CD8-positive, alpha-beta T cell (primary cell): ENCODE measurements at regions of chr17 and their contacts with region 1.

Region 1: GRCh38 chr17:42153919-42154742 is 658 bp downstream of the RAB5C start:
- DNase-seq: peak in 2 of 9 experiments; percentile 20 to 40
- ATAC-seq: no peak
- H3K4me3 ChIP-seq: peak overlapping the region; percentile 94 to 95
- H3K4me3 Mint-ChIP-seq: peak overlapping the region; percentile 98
- H3K27ac ChIP-seq: peak overlapping the region; percentile 78 to 87
- H3K27ac Mint-ChIP-seq: peak overlapping the region; percentile 95
- H3K4me1 ChIP-seq: peaks cover 24% of the 10 kb centered on the region
- H3K4me1 Mint-ChIP-seq: peaks cover 39% of the 10 kb centered on the region
- H3K27me3 ChIP-seq: no peaks in the 10 kb centered on the region
- H3K27me3 Mint-ChIP-seq: no peaks in the 10 kb centered on the region
- CTCF ChIP-seq: no peak

Region 2: GRCh38 chr17:41930009-41930832 is 223.9 kb before region 1 on chr17 and contains the start of gene ODAD4:
- CTCF ChIA-PET with region 1: no interaction called
- POLR2A ChIA-PET with region 1: no interaction called
- intact Hi-C with region 1: loop called in 1 of 2 experiments (anchors 1 kb)
- DNase-seq: peak; percentile 93 to 99 (median 97)
- ATAC-seq: peak; percentile 99
- H3K4me3 ChIP-seq: peak within 1 kb of the TSS; percentile 61 to 73
- H3K4me3 Mint-ChIP-seq: peak within 1 kb of the TSS; percentile 94
- H3K27ac ChIP-seq: peak within 1 kb of the TSS; percentile 88 to 92
- H3K27ac Mint-ChIP-seq: peak within 1 kb of the TSS; percentile 93
- H3K4me1 ChIP-seq: peaks cover 12% of the 10 kb centered on the region
- H3K4me1 Mint-ChIP-seq: peaks cover 23% of the 10 kb centered on the region
- H3K27me3 ChIP-seq: no peaks in the 10 kb centered on the region
- H3K27me3 Mint-ChIP-seq: no peaks in the 10 kb centered on the region
- CTCF ChIP-seq: peak; percentile 62
- total RNA-seq, gene ODAD4: 1.1 to 1.6 TPM

Region 3: DNA sequence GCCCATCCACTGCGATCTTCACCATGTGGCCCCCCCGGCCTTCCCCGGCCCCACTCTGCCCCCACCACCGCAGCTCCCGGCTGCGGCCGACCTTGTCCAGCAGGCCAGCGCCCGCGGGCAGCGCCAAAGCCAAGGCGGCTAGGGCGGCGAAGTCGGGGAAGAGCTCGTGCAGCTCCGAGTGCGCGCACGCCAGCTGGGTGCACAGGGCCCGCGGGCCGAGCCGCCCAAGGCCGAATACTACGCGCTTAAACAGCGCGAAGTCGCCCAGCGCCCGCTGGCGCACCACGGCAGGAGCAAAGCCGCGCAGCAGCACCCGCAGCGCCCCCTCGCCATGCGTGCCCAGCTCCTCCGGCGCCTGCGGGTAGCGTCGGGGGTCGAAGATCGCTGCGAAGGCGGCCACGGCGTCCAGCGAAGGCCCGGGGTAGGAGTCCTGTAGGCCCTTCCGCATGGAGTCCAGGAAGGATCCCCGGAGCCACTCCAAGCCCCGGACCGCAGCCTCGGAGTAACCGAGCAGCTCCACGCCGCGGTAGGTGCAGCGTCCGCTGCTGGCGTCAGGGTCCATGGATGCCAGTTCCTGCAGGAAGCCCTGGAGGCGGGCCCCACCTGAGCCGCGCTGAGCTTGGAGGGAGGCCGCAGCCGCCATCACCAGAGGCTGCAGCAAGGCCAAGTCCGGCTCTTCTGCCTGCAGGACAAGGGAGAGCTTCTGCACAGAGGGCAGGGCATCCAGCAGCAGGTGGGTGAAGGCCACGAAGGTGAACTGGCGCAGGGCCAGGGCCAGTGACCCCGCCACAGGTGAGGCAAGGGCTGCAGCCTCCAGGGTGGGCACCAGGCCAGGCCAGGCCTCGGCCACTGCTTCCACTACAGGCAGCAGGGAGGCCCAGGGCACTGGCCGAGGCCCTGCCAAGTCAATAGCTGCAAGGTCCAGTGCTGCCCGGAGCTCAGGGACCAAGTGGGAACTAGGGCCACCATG is 114.1 kb before region 1 on chr17:
- CTCF ChIA-PET with region 1: no interaction called
- POLR2A ChIA-PET with region 1: no interaction called
- intact Hi-C with region 1: no loop called
- DNase-seq: no peak
- ATAC-seq: no peak
- H3K4me3 ChIP-seq: no peak overlapping the region
- H3K4me3 Mint-ChIP-seq: no peak overlapping the region
- H3K27ac ChIP-seq: no peak overlapping the region
- H3K27ac Mint-ChIP-seq: no peak overlapping the region
- H3K4me1 ChIP-seq: no peaks in the 10 kb centered on the region
- H3K4me1 Mint-ChIP-seq: no peaks in the 10 kb centered on the region
- H3K27me3 ChIP-seq: no peaks in the 10 kb centered on the region
- H3K27me3 Mint-ChIP-seq: peaks cover 7% of the 10 kb centered on the region
- CTCF ChIP-seq: no peak

Region 4: DNA sequence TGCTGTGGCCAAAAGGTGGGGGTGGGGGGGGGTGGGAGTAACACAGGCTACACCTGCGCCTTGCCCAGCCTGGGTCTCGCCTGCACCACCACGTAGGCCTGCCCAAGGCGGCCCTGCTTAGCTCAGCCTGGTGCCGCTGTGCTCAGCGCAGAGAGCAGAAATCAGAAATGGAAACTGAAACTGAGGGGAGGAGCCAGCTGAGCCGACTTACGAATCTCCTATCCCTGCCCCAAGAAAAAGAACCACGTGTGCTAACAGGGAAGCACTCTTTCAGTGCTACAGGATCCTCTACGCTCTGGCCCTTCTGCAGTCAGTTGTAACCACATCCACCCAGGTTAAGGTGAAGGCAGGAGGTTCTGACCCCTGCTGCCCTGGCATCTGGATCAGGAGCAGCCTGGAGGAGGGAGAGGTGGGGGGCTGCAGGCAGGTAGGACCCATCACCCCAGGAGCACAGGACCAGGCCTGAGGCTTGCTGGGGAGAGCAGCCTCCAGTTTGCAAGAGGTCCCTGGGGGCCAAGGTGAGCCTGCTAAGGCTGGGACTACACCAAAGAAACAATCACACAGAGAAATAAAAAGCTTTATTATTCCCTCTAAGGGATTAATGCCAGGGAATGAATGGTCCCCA is 41.5 kb before region 1 on chr17 and contains the start of gene DHX58:
- CTCF ChIA-PET with region 1: interaction called, 6 read pairs
- POLR2A ChIA-PET with region 1: interaction called, 3 read pairs
- intact Hi-C with region 1: loop called (anchors 2 kb)
- DNase-seq: peak; percentile 65 to 94 (median 81)
- ATAC-seq: peak; percentile 80
- H3K4me3 ChIP-seq: peak within 1 kb of the TSS; percentile 66 to 88
- H3K4me3 Mint-ChIP-seq: peak within 1 kb of the TSS; percentile 92
- H3K27ac ChIP-seq: peak within 1 kb of the TSS; percentile 81 to 90
- H3K27ac Mint-ChIP-seq: peak within 1 kb of the TSS; percentile 95
- H3K4me1 ChIP-seq: peaks cover 30% of the 10 kb centered on the region
- H3K4me1 Mint-ChIP-seq: peaks cover 49% of the 10 kb centered on the region
- H3K27me3 ChIP-seq: no peaks in the 10 kb centered on the region
- H3K27me3 Mint-ChIP-seq: no peaks in the 10 kb centered on the region
- CTCF ChIP-seq: no peak
- total RNA-seq, gene DHX58: 32.8 to 39.1 TPM

Region 5: DNA sequence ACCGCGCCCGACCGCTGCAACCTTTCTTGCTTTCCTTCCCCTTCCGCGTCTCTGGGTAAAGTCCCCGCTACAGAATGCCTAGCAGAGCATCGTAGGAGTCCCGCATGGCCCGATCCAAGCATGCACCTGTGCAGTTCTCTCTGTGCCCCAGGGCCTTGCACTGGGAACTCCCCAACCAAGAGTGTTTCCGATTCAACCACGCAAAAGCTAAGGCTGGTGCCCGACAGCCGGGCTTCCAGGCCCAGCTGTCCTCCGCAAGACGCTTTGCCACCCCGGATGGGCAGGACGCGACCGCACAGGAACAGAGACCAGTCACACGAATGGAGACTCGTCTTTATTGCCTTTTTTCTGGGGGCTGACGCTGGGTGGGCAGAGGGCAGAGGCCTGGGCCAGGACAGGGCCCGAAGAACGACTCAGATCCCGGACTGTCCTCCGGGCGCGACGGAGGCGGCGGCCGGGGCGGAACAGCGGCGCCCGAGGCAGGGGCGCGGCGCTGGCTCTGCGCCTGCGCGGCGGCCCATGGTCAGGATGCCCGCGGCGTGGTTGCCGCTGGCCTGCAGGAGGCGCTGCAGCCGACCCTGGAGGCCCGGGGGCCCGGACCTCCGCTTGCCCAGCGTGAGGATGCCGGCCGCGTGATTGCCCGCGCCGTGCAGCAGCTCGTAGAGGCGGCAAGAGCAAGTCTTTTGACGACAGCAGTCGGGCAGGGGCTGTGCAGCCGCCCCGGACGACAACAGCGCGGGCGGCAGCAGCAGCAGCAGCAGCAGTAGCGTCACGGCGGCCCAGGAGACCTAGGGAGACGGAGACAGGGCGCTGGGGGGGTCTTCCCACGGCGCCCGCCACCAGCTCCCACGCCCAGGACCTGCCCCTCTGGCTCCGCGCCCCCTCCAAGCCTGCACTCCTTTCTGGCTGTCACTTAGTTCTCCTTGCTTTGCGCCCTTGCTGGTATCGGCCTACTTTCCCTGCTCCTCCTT is 29.9 kb after region 1 on chr17:
- CTCF ChIA-PET with region 1: interaction called, 5 read pairs
- POLR2A ChIA-PET with region 1: no interaction called
- intact Hi-C with region 1: loop called (anchors 1 to 2 kb)
- DNase-seq: peak; percentile 49 to 88 (median 74)
- ATAC-seq: peak; percentile 54
- H3K4me3 ChIP-seq: peak overlapping the region; percentile 75 to 91
- H3K4me3 Mint-ChIP-seq: peak overlapping the region; percentile 90
- H3K27ac ChIP-seq: peak overlapping the region; percentile 42 to 74
- H3K27ac Mint-ChIP-seq: peak overlapping the region; percentile 83
- H3K4me1 ChIP-seq: peaks cover 35% of the 10 kb centered on the region
- H3K4me1 Mint-ChIP-seq: peaks cover 37% of the 10 kb centered on the region
- H3K27me3 ChIP-seq: peaks cover 8 to 9% of the 10 kb centered on the region in 2 experiments
- H3K27me3 Mint-ChIP-seq: peaks cover 17% of the 10 kb centered on the region
- CTCF ChIP-seq: peak; percentile 68

Region 6: DNA sequence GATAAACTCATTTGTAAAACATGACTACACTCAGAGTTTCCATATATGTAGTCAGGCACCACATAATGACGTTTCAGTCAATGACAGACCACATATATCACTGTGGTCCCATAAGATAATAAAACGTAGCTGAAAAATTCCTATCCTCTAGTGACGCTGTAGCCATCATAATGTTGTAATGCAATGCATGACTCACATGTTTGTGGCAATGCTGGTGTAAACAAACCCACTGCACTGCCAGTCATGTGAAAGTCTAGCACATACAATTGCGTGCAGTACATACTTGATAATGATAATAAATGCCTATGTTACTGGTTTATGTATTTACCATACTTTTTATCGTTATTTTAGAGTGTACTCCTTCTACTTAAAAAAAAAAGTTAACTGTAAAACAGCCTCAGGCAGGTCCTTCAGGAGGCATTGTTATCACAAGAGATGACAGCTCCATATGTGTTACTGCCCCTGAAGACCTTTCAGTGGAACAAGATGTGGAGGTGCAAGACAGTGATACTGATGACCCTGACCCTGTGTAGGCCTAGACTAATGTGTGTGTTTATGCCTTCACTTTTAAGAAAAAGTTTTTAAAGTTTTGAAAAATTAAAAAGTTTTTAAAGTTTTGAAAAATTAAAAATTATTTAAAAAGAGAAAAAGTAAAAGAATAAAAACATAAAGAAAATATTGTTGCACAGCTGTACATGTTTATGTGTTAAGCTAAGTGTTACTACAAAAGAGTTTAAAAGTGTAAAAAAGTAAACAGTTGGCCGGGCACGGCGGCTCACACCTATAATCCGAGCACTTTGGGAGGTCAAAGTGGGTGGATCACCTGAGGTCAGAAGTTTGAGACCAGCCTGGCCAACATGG is 113.0 kb after region 1 on chr17:
- CTCF ChIA-PET with region 1: no interaction called
- POLR2A ChIA-PET with region 1: no interaction called
- intact Hi-C with region 1: no loop called
- DNase-seq: peak in 5 of 9 experiments; percentile 44 to 92 (median 79)
- ATAC-seq: peak; percentile 85
- H3K4me3 ChIP-seq: no peak overlapping the region
- H3K4me3 Mint-ChIP-seq: peak overlapping the region; percentile 18
- H3K27ac ChIP-seq: peak overlapping the region in 1 of 2 experiments; percentile 68
- H3K27ac Mint-ChIP-seq: peak overlapping the region; percentile 91
- H3K4me1 ChIP-seq: peaks cover 37% of the 10 kb centered on the region
- H3K4me1 Mint-ChIP-seq: peaks cover 55% of the 10 kb centered on the region
- H3K27me3 ChIP-seq: no peaks in the 10 kb centered on the region
- H3K27me3 Mint-ChIP-seq: no peaks in the 10 kb centered on the region
- CTCF ChIP-seq: no peak